Activated CD4-positive, alpha-beta memory T cell treated with anti-CD3 and anti-CD28 coated beads, Interleukin-2, amount 10 ng/mL, durations not matched to agents 7 days and 5 days (primary cell): ENCODE measurements at regions of chr21 and their contacts with region 1.

Region 1: DNA sequence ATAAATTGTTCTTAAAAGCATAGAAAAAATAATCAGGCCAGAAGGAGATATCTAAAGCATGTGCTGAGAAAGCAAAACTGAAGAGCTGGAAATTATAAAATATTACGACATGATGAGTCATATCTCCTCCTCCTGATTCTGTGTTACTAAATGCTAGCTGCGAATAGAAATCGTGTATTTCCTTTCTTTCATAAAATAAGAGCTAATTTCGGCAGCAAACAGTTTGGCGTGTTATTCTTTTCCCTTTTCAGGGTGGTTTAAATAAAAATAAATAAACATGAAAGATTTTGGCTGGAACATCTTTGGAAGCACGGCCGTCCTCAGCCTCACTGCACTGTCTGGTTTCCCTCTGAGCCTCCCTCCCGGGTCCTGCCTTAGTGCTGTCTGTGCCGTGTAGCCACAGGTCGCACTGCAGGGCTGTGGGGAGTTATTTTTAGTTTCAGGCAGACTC is 56.0 kb downstream of the ADARB1 start:
- DNase-seq: no peak
- H3K4me3 Mint-ChIP-seq: no peak overlapping the region
- H3K27ac Mint-ChIP-seq: no peak overlapping the region
- H3K4me1 Mint-ChIP-seq: peaks cover 21% of the 10 kb centered on the region
- H3K27me3 Mint-ChIP-seq: no peaks in the 10 kb centered on the region

Region 2: GRCh38 chr21:44955141-44955797 is 175.1 kb before region 1 on chr21:
- CTCF ChIA-PET with region 1: interaction called, 150 read pairs
- POLR2A ChIA-PET with region 1: no interaction called
- DNase-seq: no peak
- H3K4me3 Mint-ChIP-seq: no peak overlapping the region
- H3K27ac Mint-ChIP-seq: no peak overlapping the region
- H3K4me1 Mint-ChIP-seq: no peaks in the 10 kb centered on the region
- H3K27me3 Mint-ChIP-seq: no peaks in the 10 kb centered on the region

Region 3: GRCh38 chr21:45050786-45051489 is 79.4 kb before region 1 on chr21:
- CTCF ChIA-PET with region 1: interaction called, 14 read pairs
- POLR2A ChIA-PET with region 1: no interaction called
- DNase-seq: no peak
- H3K4me3 Mint-ChIP-seq: no peak overlapping the region
- H3K27ac Mint-ChIP-seq: no peak overlapping the region
- H3K4me1 Mint-ChIP-seq: no peaks in the 10 kb centered on the region
- H3K27me3 Mint-ChIP-seq: peaks cover 50% of the 10 kb centered on the region

Region 4: GRCh38 chr21:45098867-45099266 is 31.5 kb before region 1 on chr21:
- CTCF ChIA-PET with region 1: interaction called, 22 read pairs
- POLR2A ChIA-PET with region 1: no interaction called
- DNase-seq: no peak
- H3K4me3 Mint-ChIP-seq: no peak overlapping the region
- H3K27ac Mint-ChIP-seq: no peak overlapping the region
- H3K4me1 Mint-ChIP-seq: peaks cover 21% of the 10 kb centered on the region
- H3K27me3 Mint-ChIP-seq: no peaks in the 10 kb centered on the region